Right ventricle myocardium inferior (tissue), 1 donor: ENCODE measurements at regions of chrX and their contacts with region 1.

Region 1: DNA sequence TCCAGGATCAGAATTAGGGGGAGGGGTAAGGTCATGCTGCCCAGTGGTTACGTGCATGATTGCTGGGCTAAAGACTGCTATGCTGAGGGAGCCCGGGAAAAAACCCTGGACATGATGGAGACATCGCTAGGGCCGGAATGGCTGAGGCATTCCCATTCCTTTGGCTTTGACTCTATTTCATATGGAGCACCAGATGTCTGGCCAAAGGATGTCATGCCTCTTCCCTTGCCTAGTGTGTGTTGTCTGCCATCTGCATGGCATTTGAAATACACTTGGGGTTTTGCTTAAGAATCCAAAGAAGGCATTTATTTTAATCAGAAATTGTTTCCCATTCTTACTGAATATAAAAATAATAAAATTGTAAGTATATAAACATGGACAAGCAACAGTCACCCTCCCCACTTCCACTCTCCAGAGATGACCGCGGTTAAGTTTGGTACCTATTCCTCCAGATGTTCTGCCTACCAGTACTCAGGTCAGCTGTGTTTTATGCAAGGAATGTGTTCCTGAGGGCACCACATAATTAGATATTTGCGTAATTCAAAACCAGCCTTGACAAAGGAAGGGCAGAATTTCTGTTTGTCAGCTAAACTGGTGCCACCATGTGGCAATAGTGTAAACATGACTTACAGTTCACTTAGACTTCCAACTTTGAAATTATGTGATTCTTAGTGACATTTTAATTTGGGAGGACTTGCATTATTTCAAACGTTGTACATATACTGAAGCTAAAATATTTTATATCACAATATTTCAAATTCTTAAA is 105.9 kb downstream of the CT47B1 start:
- DNase-seq: no peak
- ATAC-seq: peak; percentile 50

Region 2: GRCh38 chrX:120499301-120500072 is 270.3 kb before region 1 on chrX:
- intact Hi-C with region 1: loop called (anchors 5 kb)
- DNase-seq: no peak
- ATAC-seq: peak; percentile 37

Region 3: DNA sequence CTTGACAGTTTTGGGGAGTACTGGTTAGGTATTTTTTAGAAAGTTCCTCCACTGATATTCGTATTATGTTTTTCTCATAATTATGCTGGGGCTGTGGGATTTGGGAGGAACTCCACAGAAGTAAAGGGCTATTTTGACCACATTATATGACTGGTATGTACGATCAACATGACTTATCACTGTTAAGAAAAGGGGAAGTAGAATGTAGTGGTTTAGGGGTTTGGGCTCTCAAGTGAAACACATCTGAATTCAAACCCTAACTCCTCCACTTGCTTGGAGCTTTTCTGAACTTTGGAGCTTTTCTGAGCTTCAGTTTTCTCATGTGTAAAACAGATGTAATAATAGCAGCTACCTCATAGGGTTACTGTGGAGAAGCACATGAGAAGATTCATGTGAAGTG is 43.5 kb before region 1 on chrX:
- intact Hi-C with region 1: no loop called
- DNase-seq: no peak
- ATAC-seq: no peak